ENCODE measurements at regions of chr12 and their contacts with region 1.

Region 1: GRCh38 chr12:54958048-54958658 is 26.4 kb downstream of the TESPA1 start:
- DNase-seq: peak; percentile 44
- ATAC-seq: peak; percentile 70
- H3K4me3 ChIP-seq: no peak overlapping the region
- H3K27ac ChIP-seq: no peak overlapping the region
- H3K4me1 ChIP-seq: peaks cover 19% of the 10 kb centered on the region
- H3K27me3 ChIP-seq: no peaks in the 10 kb centered on the region
- CTCF ChIP-seq: peak; percentile 47 to 84 (median 60); a peak in 4 of 6 replicates
- EP300 ChIP-seq: no peak
- POLR2A ChIP-seq: no peak
- RAD21 ChIP-seq: peak; percentile 88

Region 2: DNA sequence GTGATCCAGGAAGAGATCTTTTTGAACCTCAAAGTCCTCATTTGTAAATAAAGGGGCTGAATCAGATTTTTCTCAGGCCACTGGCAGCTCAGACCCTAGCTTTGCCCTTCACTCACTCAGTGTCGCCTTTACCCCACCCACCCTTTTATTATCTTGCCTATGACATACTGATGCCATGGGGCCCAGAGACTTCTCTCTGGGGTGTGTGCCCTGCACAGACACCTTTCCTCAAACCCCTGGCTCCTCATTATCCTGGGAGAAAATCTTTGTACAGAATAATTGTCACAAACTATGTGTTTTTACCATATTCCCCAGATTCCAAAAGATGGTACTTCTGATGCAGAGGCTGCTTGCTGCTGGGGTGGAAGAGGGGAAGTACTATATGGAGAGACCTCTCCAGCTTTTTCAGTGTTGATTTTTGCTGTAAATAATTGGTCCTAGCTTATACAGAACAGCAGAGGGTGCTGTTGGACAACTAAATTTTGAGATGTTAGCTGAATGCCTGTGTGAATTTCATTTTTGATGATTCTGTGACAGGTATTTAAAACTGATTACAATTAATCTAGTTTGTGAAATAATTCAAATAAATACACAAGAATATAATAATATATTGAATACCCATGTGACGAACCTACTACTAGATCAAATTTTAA is 256.1 kb before region 1 on chr12:
- CTCF ChIA-PET with region 1: interaction called, 24 read pairs
- POLR2A ChIA-PET with region 1: no interaction called
- RAD21 ChIA-PET with region 1: interaction called, 5 read pairs
- SMC1A ChIA-PET with region 1: interaction called, 7 read pairs
- in situ Hi-C with region 1: no loop called
- intact Hi-C with region 1: no loop called
- DNase-seq: no peak
- ATAC-seq: peak; percentile 80
- H3K4me3 ChIP-seq: no peak overlapping the region
- H3K27ac ChIP-seq: no peak overlapping the region
- H3K4me1 ChIP-seq: no peaks in the 10 kb centered on the region
- H3K27me3 ChIP-seq: no peaks in the 10 kb centered on the region; a peak in 3 of 4 replicates
- CTCF ChIP-seq: peak; percentile 49 to 64 (median 52); a peak in 4 of 6 replicates
- EP300 ChIP-seq: no peak
- POLR2A ChIP-seq: no peak
- RAD21 ChIP-seq: peak; percentile 68

Region 3: DNA sequence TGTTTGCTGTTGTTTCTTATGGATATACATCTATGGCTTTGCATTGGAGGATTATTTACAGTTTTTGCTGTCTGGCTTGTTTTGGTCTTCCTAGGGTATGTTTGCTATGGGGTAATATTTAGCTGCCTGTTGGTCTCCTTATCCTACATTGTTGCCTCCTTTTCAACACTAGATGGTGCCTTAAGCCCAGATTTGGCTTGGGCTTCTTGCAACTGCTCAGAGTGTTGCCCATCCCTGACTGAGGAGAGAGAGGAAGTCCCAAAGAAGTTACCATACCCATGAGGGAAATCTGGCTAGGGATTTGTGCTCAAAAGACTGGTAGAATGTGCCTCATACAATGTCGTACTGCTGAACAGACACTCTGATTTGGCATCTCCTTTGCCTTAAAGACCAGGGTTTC is 198.4 kb before region 1 on chr12:
- CTCF ChIA-PET with region 1: interaction called, 30 read pairs
- POLR2A ChIA-PET with region 1: no interaction called
- RAD21 ChIA-PET with region 1: interaction called, 8 read pairs
- SMC1A ChIA-PET with region 1: interaction called, 5 read pairs
- in situ Hi-C with region 1: no loop called
- intact Hi-C with region 1: loop called (anchors 1 kb)
- DNase-seq: peak; percentile 7
- ATAC-seq: peak; percentile 86
- H3K4me3 ChIP-seq: no peak overlapping the region
- H3K27ac ChIP-seq: no peak overlapping the region
- H3K4me1 ChIP-seq: no peaks in the 10 kb centered on the region
- H3K27me3 ChIP-seq: no peaks in the 10 kb centered on the region
- CTCF ChIP-seq: peak; percentile 34 to 48 (median 39); a peak in 5 of 6 replicates
- EP300 ChIP-seq: no peak
- POLR2A ChIP-seq: no peak
- RAD21 ChIP-seq: peak; percentile 72

Region 4: GRCh38 chr12:54935235-54935951 is 22.8 kb before region 1 on chr12:
- CTCF ChIA-PET with region 1: interaction called, 19 read pairs
- POLR2A ChIA-PET with region 1: no interaction called
- RAD21 ChIA-PET with region 1: interaction called, 6 read pairs
- SMC1A ChIA-PET with region 1: interaction called, 9 read pairs
- in situ Hi-C with region 1: no loop called
- intact Hi-C with region 1: no loop called
- DNase-seq: peak; percentile 60
- ATAC-seq: peak; percentile 98
- H3K4me3 ChIP-seq: no peak overlapping the region
- H3K27ac ChIP-seq: peak overlapping the region; percentile 60
- H3K4me1 ChIP-seq: peaks cover 5% of the 10 kb centered on the region
- H3K27me3 ChIP-seq: no peaks in the 10 kb centered on the region
- CTCF ChIP-seq: peak in 2 of 3 experiments; percentile 1 to 39; a peak in 2 of 6 replicates
- EP300 ChIP-seq: no peak
- POLR2A ChIP-seq: no peak
- RAD21 ChIP-seq: peak; percentile 63